Aorta (tissue), 5 donors: ENCODE measurements at regions of chr6 and their contacts with region 1.

Region 1: GRCh38 chr6:31643818-31644454 is 8.5 kb downstream of the BAG6 start:
- DNase-seq: no peak
- ATAC-seq: no peak
- H3K4me3 ChIP-seq: no peak overlapping the region
- H3K27ac ChIP-seq: no peak overlapping the region
- H3K4me1 ChIP-seq: no peaks in the 10 kb centered on the region
- H3K27me3 ChIP-seq: no peaks in the 10 kb centered on the region

Region 2: DNA sequence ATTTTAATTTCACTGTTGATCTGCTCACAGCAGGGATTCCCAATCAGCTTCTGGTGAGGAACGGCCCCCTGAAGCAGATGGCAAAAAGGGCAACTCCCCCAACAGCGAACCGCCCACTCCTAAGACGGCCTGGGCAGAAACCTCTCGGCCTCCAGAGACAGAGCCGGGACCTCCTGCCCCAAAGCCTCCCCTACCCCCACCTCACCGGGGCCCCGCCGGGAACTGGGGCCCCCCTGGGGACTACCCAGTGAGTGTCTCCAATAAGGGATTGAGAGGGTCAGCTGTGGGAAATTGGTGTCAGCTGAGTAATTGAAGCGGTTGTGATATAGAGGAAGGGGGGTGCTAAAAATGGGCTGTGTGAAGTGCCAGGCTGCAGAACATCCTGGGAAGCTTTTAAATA is 17.0 kb before region 1 on chr6:
- intact Hi-C with region 1: loop called in 1 of 2 experiments (anchors 2 kb)
- DNase-seq: no peak
- ATAC-seq: no peak
- H3K4me3 ChIP-seq: no peak overlapping the region
- H3K27ac ChIP-seq: no peak overlapping the region
- H3K4me1 ChIP-seq: no peaks in the 10 kb centered on the region
- H3K27me3 ChIP-seq: no peaks in the 10 kb centered on the region